ENCODE measurements at regions of chr6 and their contacts with region 1.

Region 1: GRCh38 chr6:683742-684440 is 9.0 kb downstream of the EXOC2 start:
- DNase-seq: no peak
- H3K4me3 Mint-ChIP-seq: peak overlapping the region; percentile 10
- H3K27ac Mint-ChIP-seq: no peak overlapping the region
- H3K4me1 Mint-ChIP-seq: peaks cover 52% of the 10 kb centered on the region
- H3K27me3 Mint-ChIP-seq: no peaks in the 10 kb centered on the region

Region 2: GRCh38 chr6:317448-318144 is 366.3 kb before region 1 on chr6:
- CTCF ChIA-PET with region 1: no interaction called
- intact Hi-C with region 1: loop called (anchors 1 kb)
- DNase-seq: no peak
- H3K4me3 Mint-ChIP-seq: no peak overlapping the region
- H3K27ac Mint-ChIP-seq: no peak overlapping the region
- H3K4me1 Mint-ChIP-seq: peaks cover 29% of the 10 kb centered on the region
- H3K27me3 Mint-ChIP-seq: no peaks in the 10 kb centered on the region

Region 3: DNA sequence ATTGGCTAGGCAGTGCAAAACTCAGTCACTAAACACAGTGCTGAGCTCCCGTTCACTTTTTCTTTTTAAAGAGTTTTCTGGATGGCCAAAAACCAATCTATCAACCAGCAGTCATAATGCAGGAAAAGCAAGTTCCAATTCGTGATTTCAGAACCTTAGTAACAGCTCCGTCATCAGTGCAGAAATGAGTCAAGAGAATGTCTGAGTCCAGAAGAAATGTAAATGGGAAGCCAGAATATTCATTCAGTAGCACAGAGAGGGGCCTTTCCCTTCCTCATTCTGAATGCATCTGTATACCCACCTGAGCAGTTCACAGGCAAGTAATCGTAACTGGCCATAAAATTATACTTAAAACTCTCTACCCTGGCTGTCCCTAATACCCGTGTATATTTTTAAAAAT is 47.4 kb before region 1 on chr6:
- CTCF ChIA-PET with region 1: no interaction called
- intact Hi-C with region 1: loop called (anchors 1 kb)
- DNase-seq: peak; percentile 44
- H3K4me3 Mint-ChIP-seq: no peak overlapping the region
- H3K27ac Mint-ChIP-seq: peak overlapping the region; percentile 50
- H3K4me1 Mint-ChIP-seq: peaks cover 19% of the 10 kb centered on the region
- H3K27me3 Mint-ChIP-seq: no peaks in the 10 kb centered on the region

Region 4: DNA sequence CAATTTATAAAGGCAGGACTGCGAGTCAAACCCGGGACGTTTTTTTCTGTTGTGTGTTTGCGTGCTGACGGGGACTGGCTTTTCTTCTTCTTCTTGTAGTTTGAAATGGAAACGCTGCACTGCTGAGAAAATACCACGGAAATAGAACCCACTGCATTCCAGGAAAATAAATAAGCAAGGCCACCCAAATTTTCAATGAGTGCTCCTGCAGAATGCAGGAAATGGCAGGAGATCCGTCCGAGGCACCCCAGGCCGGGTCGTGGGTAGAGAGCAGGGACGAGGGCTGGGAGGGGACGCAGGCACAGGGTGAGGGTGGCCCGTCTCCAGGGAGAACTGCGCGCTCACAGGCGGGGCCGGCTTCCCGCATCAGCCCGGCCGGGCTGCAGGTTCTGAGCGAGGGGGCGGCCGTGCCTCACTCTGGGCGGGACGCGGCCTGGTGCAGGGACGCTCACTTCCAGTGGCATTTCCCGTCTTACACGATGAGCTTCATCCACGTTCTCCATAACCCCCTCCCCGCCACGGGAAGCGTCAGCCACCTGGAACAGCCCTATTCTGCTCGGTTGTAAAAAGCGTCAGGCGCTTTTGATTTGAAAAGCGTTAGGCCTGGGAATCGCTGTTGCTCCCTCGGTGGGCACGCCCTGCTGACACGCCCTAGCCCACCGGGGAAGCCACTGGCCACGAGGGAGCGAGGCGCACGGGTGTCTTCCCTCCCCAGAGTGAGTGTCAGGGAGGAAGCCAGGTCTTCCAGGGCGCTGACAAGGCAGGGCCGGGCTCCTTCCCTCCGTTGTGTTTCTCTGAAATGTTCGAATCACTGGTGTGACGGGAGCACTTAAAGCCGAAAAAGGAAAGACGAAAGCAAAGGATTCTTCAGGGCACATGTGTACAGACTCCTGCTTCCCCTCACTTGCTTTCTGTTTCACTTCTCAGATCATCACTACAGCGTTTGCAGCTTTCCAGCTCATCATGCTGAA is 27.0 kb after region 1 on chr6:
- CTCF ChIA-PET with region 1: interaction called, 3 read pairs
- intact Hi-C with region 1: loop called (anchors 2 kb)
- DNase-seq: peak; percentile 64
- H3K4me3 Mint-ChIP-seq: peak overlapping the region; percentile 89
- H3K27ac Mint-ChIP-seq: peak overlapping the region; percentile 92
- H3K4me1 Mint-ChIP-seq: peaks cover 21% of the 10 kb centered on the region
- H3K27me3 Mint-ChIP-seq: peaks cover 4% of the 10 kb centered on the region